ENCODE measurements at regions of chr5 and their contacts with region 1.

Region 1: GRCh38 chr5:159987031-159987674 is 21.8 kb upstream of the TTC1 start:
- H3K4me3 ChIP-seq: peak overlapping the region; percentile 38
- H3K27ac ChIP-seq: no peak overlapping the region
- H3K4me1 ChIP-seq: peaks cover 3% of the 10 kb centered on the region; the same call in 1 of the 2 replicates
- CTCF ChIP-seq: peak; percentile 87

Region 2: GRCh38 chr5:159286420-159287035 is 700.6 kb before region 1 on chr5:
- CTCF ChIA-PET with region 1: interaction called, 25 read pairs
- POLR2A ChIA-PET with region 1: no interaction called
- H3K4me3 ChIP-seq: no peak overlapping the region
- H3K27ac ChIP-seq: no peak overlapping the region
- H3K4me1 ChIP-seq: no peaks in the 10 kb centered on the region
- CTCF ChIP-seq: no peak

Region 3: GRCh38 chr5:159451197-159452052 is 535.7 kb before region 1 on chr5:
- CTCF ChIA-PET with region 1: interaction called, 68 read pairs
- POLR2A ChIA-PET with region 1: no interaction called
- H3K4me3 ChIP-seq: no peak overlapping the region
- H3K27ac ChIP-seq: no peak overlapping the region; the same call in 1 of the 2 replicates
- H3K4me1 ChIP-seq: peaks cover 16% of the 10 kb centered on the region
- CTCF ChIP-seq: no peak

Region 4: DNA sequence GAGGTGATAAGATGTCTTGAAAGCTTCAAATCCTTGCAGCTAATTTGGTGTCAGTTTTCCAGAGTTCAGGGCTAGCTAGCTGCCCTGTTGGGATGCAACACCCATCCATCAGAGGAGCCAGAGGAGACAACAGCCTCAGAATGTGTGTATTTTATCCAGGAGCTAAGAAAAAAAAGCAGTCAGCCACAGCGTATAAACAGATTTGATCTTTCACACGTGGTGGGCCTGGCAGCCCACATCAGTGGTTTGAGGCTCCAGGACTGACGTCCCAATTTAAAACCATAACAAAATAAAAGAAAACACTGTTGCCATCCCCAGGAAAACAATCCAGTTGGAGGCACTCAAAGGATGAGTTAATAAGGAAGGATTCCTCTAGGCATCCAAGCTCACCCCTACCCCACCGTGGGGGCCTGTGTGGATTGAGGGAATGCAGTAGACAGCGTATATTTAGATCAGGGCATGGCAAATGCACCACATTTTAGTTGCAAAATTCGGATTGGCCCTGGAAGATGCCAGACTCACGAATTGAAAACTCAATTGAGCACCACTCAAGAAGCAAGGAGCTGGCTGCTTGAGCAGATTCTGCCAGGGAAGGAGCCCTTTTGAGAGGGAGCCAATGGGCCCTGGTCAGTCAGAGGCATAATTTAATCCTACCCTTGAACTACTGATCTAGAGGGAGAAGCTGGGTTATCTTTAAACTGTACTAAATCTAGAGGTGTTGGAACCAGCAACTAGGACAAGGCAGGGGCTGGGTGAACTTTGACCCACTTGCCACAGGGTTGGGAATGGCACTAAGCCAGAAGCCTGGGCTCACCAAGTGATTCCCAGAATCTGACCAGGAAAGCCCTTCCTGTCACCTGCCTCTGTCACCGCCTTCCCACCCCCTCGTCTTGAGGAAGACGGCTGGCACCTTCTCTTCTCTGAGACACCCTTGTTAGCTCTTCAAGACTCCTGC is 53.3 kb before region 1 on chr5:
- CTCF ChIA-PET with region 1: interaction called, 12 read pairs
- POLR2A ChIA-PET with region 1: no interaction called
- H3K4me3 ChIP-seq: no peak overlapping the region
- H3K27ac ChIP-seq: no peak overlapping the region
- H3K4me1 ChIP-seq: peaks cover 11% of the 10 kb centered on the region
- CTCF ChIP-seq: no peak

Region 5: GRCh38 chr5:159975462-159976019 is 11.6 kb before region 1 on chr5:
- CTCF ChIA-PET with region 1: interaction called, 50 read pairs
- POLR2A ChIA-PET with region 1: interaction called, 4 read pairs
- H3K4me3 ChIP-seq: no peak overlapping the region
- H3K27ac ChIP-seq: no peak overlapping the region
- H3K4me1 ChIP-seq: no peaks in the 10 kb centered on the region
- CTCF ChIP-seq: no peak

Region 6: GRCh38 chr5:160030631-160031377 is 43.7 kb after region 1 on chr5:
- CTCF ChIA-PET with region 1: no interaction called
- POLR2A ChIA-PET with region 1: no interaction called
- H3K4me3 ChIP-seq: no peak overlapping the region
- H3K27ac ChIP-seq: no peak overlapping the region
- H3K4me1 ChIP-seq: no peaks in the 10 kb centered on the region
- CTCF ChIP-seq: no peak

Region 7: GRCh38 chr5:160221082-160221481 is 233.9 kb after region 1 on chr5:
- CTCF ChIA-PET with region 1: no interaction called
- POLR2A ChIA-PET with region 1: no interaction called
- H3K4me3 ChIP-seq: no peak overlapping the region
- H3K27ac ChIP-seq: no peak overlapping the region
- H3K4me1 ChIP-seq: no peaks in the 10 kb centered on the region
- CTCF ChIP-seq: no peak

Measured in HEK293 (cell line).